Thyroid gland (tissue), 4 donors: ENCODE measurements at regions of chr2 and their contacts with region 1.

Region 1: DNA sequence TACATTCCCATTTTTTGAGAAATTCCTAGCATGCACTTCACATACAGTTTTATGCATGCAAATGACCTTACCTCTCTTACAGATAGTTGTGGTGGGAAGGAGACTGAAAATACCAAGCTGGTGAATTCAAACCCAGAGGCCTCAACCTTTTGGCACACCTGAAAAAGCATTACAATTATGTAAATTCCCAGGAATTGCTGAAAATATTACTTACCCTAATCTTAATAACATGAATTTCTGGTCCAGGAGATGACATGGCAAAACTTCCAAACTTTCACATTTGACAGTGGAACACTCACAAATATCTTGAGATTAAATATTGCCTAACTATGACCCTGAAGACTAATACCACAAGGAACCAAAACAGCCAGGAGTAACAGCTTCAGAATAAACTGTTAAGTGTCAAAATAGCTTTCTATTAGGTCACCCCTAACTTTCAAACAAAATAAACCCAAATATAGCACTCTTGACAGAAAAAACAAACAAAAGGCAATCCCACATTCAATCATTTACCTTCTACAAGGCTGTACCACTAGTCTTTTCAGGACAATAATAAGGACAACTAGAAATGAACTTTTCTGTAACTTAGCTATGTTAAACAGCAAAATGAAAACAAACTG is 10.9 kb upstream of the PEX13 start:
- DNase-seq: no peak
- H3K4me3 ChIP-seq: no peak overlapping the region
- H3K27ac ChIP-seq: no peak overlapping the region
- H3K4me1 ChIP-seq: peaks cover 0 to under 1% of the 10 kb centered on the region in 2 donors
- H3K27me3 ChIP-seq: no peaks in the 10 kb centered on the region
- CTCF ChIP-seq: no peak
- POLR2A ChIP-seq: no peak

Region 2: GRCh38 chr2:60794277-60794863 is 212.2 kb before region 1 on chr2:
- intact Hi-C with region 1: loop called (anchors 10 kb)
- DNase-seq: no peak
- H3K4me3 ChIP-seq: no peak overlapping the region
- H3K27ac ChIP-seq: no peak overlapping the region
- H3K4me1 ChIP-seq: no peaks in the 10 kb centered on the region
- H3K27me3 ChIP-seq: no peaks in the 10 kb centered on the region
- CTCF ChIP-seq: peak in 3 of 6 experiments; percentile 48 to 58 (median 48)
- POLR2A ChIP-seq: no peak